Mammary epithelial cell (primary cell): ENCODE measurements at regions of chr19 and their contacts with region 1.

Region 1: GRCh38 chr19:39160334-39160791 is 34.8 kb downstream of the PAK4 start:
- DNase-seq: peak; percentile 62
- H3K4me3 ChIP-seq: no peak overlapping the region
- H3K27ac ChIP-seq: peak overlapping the region; percentile 61
- H3K4me1 ChIP-seq: peaks cover 48% of the 10 kb centered on the region
- H3K27me3 ChIP-seq: no peaks in the 10 kb centered on the region
- CTCF ChIP-seq: peak in 1 of 2 donors; percentile 10

Region 2: GRCh38 chr19:39125554-39126311 is 34.6 kb before region 1 on chr19 and contains the start of gene PAK4:
- CTCF ChIA-PET with region 1: no interaction called
- dilution Hi-C with region 1: no loop called
- in situ Hi-C with region 1: no loop called
- intact Hi-C with region 1: loop called (anchors 2 kb)
- DNase-seq: peak; percentile 97
- H3K4me3 ChIP-seq: peak within 1 kb of the TSS; percentile 64 to 86 (median 80)
- H3K27ac ChIP-seq: peak within 1 kb of the TSS; percentile 65
- H3K4me1 ChIP-seq: peaks cover 13% of the 10 kb centered on the region
- H3K27me3 ChIP-seq: no peaks in the 10 kb centered on the region
- CTCF ChIP-seq: no peak
- total RNA-seq, gene PAK4: 8.8 to 45.1 TPM

Region 3: GRCh38 chr19:39246951-39247669 is 86.7 kb after region 1 on chr19:
- CTCF ChIA-PET with region 1: no interaction called
- dilution Hi-C with region 1: no loop called
- in situ Hi-C with region 1: no loop called
- intact Hi-C with region 1: no loop called
- DNase-seq: no peak
- H3K4me3 ChIP-seq: no peak overlapping the region
- H3K27ac ChIP-seq: no peak overlapping the region
- H3K4me1 ChIP-seq: peaks cover 5% of the 10 kb centered on the region
- H3K27me3 ChIP-seq: peaks cover 18% of the 10 kb centered on the region
- CTCF ChIP-seq: no peak